Transverse colon (tissue), 4 donors: ENCODE measurements at regions of chr11 and their contacts with region 1.

Region 1: GRCh38 chr11:128323381-128323780 is 264.0 kb downstream of the ETS1 start:
- DNase-seq: peak; percentile 40
- H3K4me3 ChIP-seq: no peak overlapping the region
- H3K27ac ChIP-seq: peak overlapping the region; percentile 10 to 66 (median 42)
- H3K4me1 ChIP-seq: peaks cover 0 to 8% (median 2%) of the 10 kb centered on the region in 4 donors
- H3K27me3 ChIP-seq: no peaks in the 10 kb centered on the region
- CTCF ChIP-seq: peak; percentile 11 to 53 (median 26)
- EP300 ChIP-seq: no peak
- POLR2A ChIP-seq: no peak

Region 2: DNA sequence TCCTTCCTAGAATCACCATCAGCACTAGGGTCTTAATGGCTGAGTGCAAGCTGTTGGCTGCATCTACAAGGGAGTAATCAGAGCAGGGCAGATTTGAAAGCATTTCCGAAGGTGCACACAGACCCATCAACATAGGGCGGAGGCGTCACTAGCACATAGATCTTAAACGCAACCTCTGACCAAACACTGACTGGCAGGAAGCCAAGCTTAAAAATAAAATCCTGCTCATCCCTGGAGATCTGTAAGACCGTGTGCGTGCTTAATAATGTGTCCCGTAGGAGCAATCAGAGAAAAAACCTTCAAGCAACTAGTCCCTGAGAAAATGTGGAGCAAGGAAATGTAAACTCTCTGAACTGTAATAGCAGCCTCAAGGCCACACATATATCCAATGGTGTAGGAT is 206.5 kb before region 1 on chr11:
- in situ Hi-C with region 1: no loop called
- intact Hi-C with region 1: no loop called
- DNase-seq: no peak
- H3K4me3 ChIP-seq: no peak overlapping the region
- H3K27ac ChIP-seq: no peak overlapping the region
- H3K4me1 ChIP-seq: no peaks in the 10 kb centered on the region
- H3K27me3 ChIP-seq: no peaks in the 10 kb centered on the region
- CTCF ChIP-seq: no peak
- EP300 ChIP-seq: no peak
- POLR2A ChIP-seq: no peak

Region 3: GRCh38 chr11:128261011-128261421 is 62.4 kb before region 1 on chr11:
- in situ Hi-C with region 1: no loop called
- intact Hi-C with region 1: no loop called
- DNase-seq: no peak
- H3K4me3 ChIP-seq: no peak overlapping the region
- H3K27ac ChIP-seq: no peak overlapping the region
- H3K4me1 ChIP-seq: no peaks in the 10 kb centered on the region
- H3K27me3 ChIP-seq: no peaks in the 10 kb centered on the region
- CTCF ChIP-seq: no peak
- EP300 ChIP-seq: no peak
- POLR2A ChIP-seq: no peak

Region 4: GRCh38 chr11:128372977-128373376 is 49.6 kb after region 1 on chr11:
- in situ Hi-C with region 1: no loop called
- intact Hi-C with region 1: loop called (anchors 5 kb)
- DNase-seq: no peak
- H3K4me3 ChIP-seq: no peak overlapping the region
- H3K27ac ChIP-seq: no peak overlapping the region
- H3K4me1 ChIP-seq: no peaks in the 10 kb centered on the region
- H3K27me3 ChIP-seq: no peaks in the 10 kb centered on the region
- CTCF ChIP-seq: no peak
- EP300 ChIP-seq: no peak
- POLR2A ChIP-seq: no peak

Region 5: GRCh38 chr11:128472128-128473089 is 149.0 kb after region 1 on chr11:
- in situ Hi-C with region 1: loop called in 1 of 4 experiments (anchors 25 kb)
- intact Hi-C with region 1: no loop called
- DNase-seq: no peak
- H3K4me3 ChIP-seq: no peak overlapping the region
- H3K27ac ChIP-seq: peak overlapping the region; percentile 59 to 75 (median 68)
- H3K4me1 ChIP-seq: peaks cover 29 to 92% (median 38%) of the 10 kb centered on the region in 4 donors
- H3K27me3 ChIP-seq: no peaks in the 10 kb centered on the region
- CTCF ChIP-seq: no peak
- EP300 ChIP-seq: no peak
- POLR2A ChIP-seq: no peak